PC-3 (cell line): ENCODE measurements at regions of chr1 and their contacts with region 1.

Region 1: GRCh38 chr1:232630047-232630893 is at the start of gene SIPA1L2:
- DNase-seq: peak; percentile 97
- ATAC-seq: peak; percentile 88
- H3K4me3 ChIP-seq: peak within 1 kb of the TSS; percentile 77
- H3K27ac ChIP-seq: peak within 1 kb of the TSS; percentile 30
- H3K4me1 ChIP-seq: peaks cover 34% of the 10 kb centered on the region
- H3K27me3 ChIP-seq: no peaks in the 10 kb centered on the region
- CTCF ChIP-seq: peak; percentile 83
- total RNA-seq, gene SIPA1L2: 8.9 and 9.8 TPM in 2 replicates

Region 2: GRCh38 chr1:231866392-231867331 is 763.6 kb before region 1 on chr1:
- CTCF ChIA-PET with region 1: interaction called, 16 read pairs
- POLR2A ChIA-PET with region 1: no interaction called
- intact Hi-C with region 1: loop called (anchors 1 kb)
- DNase-seq: peak; percentile 79
- ATAC-seq: peak; percentile 67
- H3K4me3 ChIP-seq: no peak overlapping the region
- H3K27ac ChIP-seq: no peak overlapping the region
- H3K4me1 ChIP-seq: peaks cover 5% of the 10 kb centered on the region; the same call in 1 of the 2 replicates
- H3K27me3 ChIP-seq: no peaks in the 10 kb centered on the region
- CTCF ChIP-seq: peak; percentile 99

Region 3: GRCh38 chr1:232174306-232174705 is 456.0 kb before region 1 on chr1:
- CTCF ChIA-PET with region 1: no interaction called
- POLR2A ChIA-PET with region 1: no interaction called
- intact Hi-C with region 1: loop called (anchors 1 kb)
- DNase-seq: no peak
- ATAC-seq: no peak
- H3K4me3 ChIP-seq: no peak overlapping the region
- H3K27ac ChIP-seq: no peak overlapping the region
- H3K4me1 ChIP-seq: no peaks in the 10 kb centered on the region
- H3K27me3 ChIP-seq: no peaks in the 10 kb centered on the region
- CTCF ChIP-seq: no peak

Region 4: GRCh38 chr1:232486454-232487207 is 143.6 kb before region 1 on chr1:
- CTCF ChIA-PET with region 1: interaction called, 6 read pairs
- POLR2A ChIA-PET with region 1: no interaction called
- intact Hi-C with region 1: loop called (anchors 5 kb)
- DNase-seq: peak; percentile 92
- ATAC-seq: peak; percentile 74
- H3K4me3 ChIP-seq: no peak overlapping the region
- H3K27ac ChIP-seq: peak overlapping the region; percentile 75
- H3K4me1 ChIP-seq: peaks cover 30% of the 10 kb centered on the region
- H3K27me3 ChIP-seq: no peaks in the 10 kb centered on the region
- CTCF ChIP-seq: no peak

Region 5: GRCh38 chr1:232657426-232658005 is 27.2 kb after region 1 on chr1:
- CTCF ChIA-PET with region 1: no interaction called
- POLR2A ChIA-PET with region 1: no interaction called
- intact Hi-C with region 1: no loop called
- DNase-seq: no peak
- ATAC-seq: no peak
- H3K4me3 ChIP-seq: no peak overlapping the region
- H3K27ac ChIP-seq: no peak overlapping the region
- H3K4me1 ChIP-seq: peaks cover 15% of the 10 kb centered on the region
- H3K27me3 ChIP-seq: no peaks in the 10 kb centered on the region
- CTCF ChIP-seq: no peak

Region 6: DNA sequence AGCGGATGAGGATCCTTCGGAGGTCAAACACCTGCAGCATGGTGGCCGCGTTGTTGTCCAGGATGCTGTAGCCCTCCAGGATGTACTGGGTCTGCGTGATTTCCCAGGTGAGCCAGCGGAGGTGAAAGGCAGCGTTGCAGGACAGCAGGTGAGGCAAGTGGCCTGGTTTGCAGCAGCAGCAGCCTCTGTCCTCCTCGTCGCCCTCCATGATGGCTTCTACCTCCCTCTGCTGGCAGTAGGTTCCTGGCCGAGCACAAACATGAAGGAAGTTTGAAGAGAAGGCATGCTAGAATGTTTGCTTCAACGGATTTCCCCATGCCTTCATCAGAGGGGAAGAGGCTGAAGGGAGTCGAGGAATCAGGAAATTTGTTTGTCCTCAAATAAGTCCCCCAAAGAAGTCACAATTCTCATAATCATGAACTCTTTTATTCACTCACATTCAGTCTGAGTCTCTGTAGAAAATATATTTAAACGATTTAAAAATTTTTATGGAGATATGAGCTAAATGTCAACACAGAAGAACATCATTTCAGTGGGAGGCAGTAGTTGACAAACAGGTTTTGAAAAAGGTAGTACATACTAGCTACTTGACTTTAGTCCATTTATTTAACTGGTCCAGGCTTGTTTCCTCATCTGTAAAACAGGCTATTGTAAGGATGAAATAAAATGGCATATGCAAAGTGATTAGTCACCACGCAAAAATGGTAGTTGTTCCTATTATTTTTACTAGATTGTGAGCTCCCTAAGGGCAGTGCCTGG is 395.1 kb after region 1 on chr1:
- CTCF ChIA-PET with region 1: interaction called, 8 read pairs
- POLR2A ChIA-PET with region 1: interaction called, 6 read pairs
- intact Hi-C with region 1: loop called (anchors 1 kb)
- DNase-seq: peak; percentile 87
- ATAC-seq: peak; percentile 87
- H3K4me3 ChIP-seq: no peak overlapping the region
- H3K27ac ChIP-seq: peak overlapping the region; percentile 59
- H3K4me1 ChIP-seq: peaks cover 18% of the 10 kb centered on the region
- H3K27me3 ChIP-seq: no peaks in the 10 kb centered on the region
- CTCF ChIP-seq: peak; percentile 81

Region 7: GRCh38 chr1:233240829-233241682 is 610.8 kb after region 1 on chr1:
- CTCF ChIA-PET with region 1: no interaction called
- POLR2A ChIA-PET with region 1: no interaction called
- intact Hi-C with region 1: loop called (anchors 2 kb)
- DNase-seq: peak; percentile 39
- ATAC-seq: peak; percentile 70
- H3K4me3 ChIP-seq: no peak overlapping the region
- H3K27ac ChIP-seq: no peak overlapping the region
- H3K4me1 ChIP-seq: no peaks in the 10 kb centered on the region
- H3K27me3 ChIP-seq: no peaks in the 10 kb centered on the region
- CTCF ChIP-seq: peak; percentile 80